CD14-positive monocyte (primary cell): ENCODE measurements at regions of chr2 and their contacts with region 1.

Region 1: GRCh38 chr2:217650716-217651360 is 352.0 kb downstream of the TNS1 start:
- DNase-seq: peak; percentile 16 to 26 (median 25)
- H3K4me3 ChIP-seq: no peak overlapping the region
- H3K4me3 Mint-ChIP-seq: no peak overlapping the region
- H3K27ac ChIP-seq: no peak overlapping the region
- H3K27ac Mint-ChIP-seq: no peak overlapping the region
- H3K4me1 ChIP-seq: no peaks in the 10 kb centered on the region
- H3K4me1 Mint-ChIP-seq: peaks cover 4% of the 10 kb centered on the region
- H3K27me3 ChIP-seq: peaks cover 0 to 2% of the 10 kb centered on the region in 2 donors
- H3K27me3 Mint-ChIP-seq: peaks cover 4 to 11% (median 10%) of the 10 kb centered on the region in 3 donors
- CTCF ChIP-seq: peak; percentile 81

Region 2: GRCh38 chr2:217753460-217754200 is 102.8 kb after region 1 on chr2:
- intact Hi-C with region 1: loop called in 1 of 2 experiments (anchors 5 kb)
- DNase-seq: no peak
- H3K4me3 ChIP-seq: no peak overlapping the region
- H3K4me3 Mint-ChIP-seq: no peak overlapping the region
- H3K27ac ChIP-seq: no peak overlapping the region
- H3K27ac Mint-ChIP-seq: no peak overlapping the region
- H3K4me1 ChIP-seq: peaks cover 5 to 6% of the 10 kb centered on the region in 2 donors
- H3K4me1 Mint-ChIP-seq: peaks cover 3% of the 10 kb centered on the region
- H3K27me3 ChIP-seq: peaks cover 5 to 14% of the 10 kb centered on the region in 2 donors
- H3K27me3 Mint-ChIP-seq: peaks cover 3 to 25% (median 12%) of the 10 kb centered on the region in 3 donors
- CTCF ChIP-seq: no peak